ENCODE measurements at regions of chr3 and their contacts with region 1.

Region 1: DNA sequence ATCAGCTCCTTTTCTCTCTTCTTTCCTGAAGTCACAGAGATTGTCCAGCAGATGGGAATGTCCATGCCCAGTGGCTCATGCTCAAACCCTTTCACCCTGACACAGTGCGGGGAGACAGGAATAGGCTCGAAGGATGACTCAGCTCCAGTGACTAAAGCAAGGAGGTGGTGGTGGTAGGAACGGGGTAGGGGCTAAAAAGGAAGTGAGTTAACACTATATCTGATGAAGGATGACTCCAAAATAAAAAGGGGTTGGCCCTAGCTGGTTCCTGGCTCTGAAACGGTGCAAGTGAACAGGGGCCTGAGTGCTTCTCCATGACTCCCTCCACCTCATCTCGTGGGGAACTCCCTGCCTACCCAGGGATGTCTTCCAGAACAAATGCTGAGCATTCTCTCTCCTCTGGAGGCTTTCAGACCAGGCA is 167.4 kb upstream of the LPP start:
- DNase-seq: peak in 1 of 2 donors; percentile 26
- ATAC-seq: peak; percentile 40 to 69 (median 65)
- H3K4me3 ChIP-seq: no peak overlapping the region
- H3K4me3 Mint-ChIP-seq: peak overlapping the region; percentile 63
- H3K27ac ChIP-seq: no peak overlapping the region
- H3K27ac Mint-ChIP-seq: peak overlapping the region; percentile 47 to 74
- H3K4me1 ChIP-seq: peaks cover 26% of the 10 kb centered on the region
- H3K4me1 Mint-ChIP-seq: peaks cover 29 to 49% of the 10 kb centered on the region in 2 donors
- H3K27me3 ChIP-seq: no peaks in the 10 kb centered on the region
- H3K27me3 Mint-ChIP-seq: no peaks in the 10 kb centered on the region
- CTCF ChIP-seq: no peak

Region 2: GRCh38 chr3:187943679-187944390 is 42.7 kb before region 1 on chr3:
- intact Hi-C with region 1: no loop called
- DNase-seq: no peak
- ATAC-seq: no peak
- H3K4me3 ChIP-seq: no peak overlapping the region
- H3K4me3 Mint-ChIP-seq: no peak overlapping the region
- H3K27ac ChIP-seq: no peak overlapping the region
- H3K27ac Mint-ChIP-seq: no peak overlapping the region
- H3K4me1 ChIP-seq: peaks cover 19% of the 10 kb centered on the region
- H3K4me1 Mint-ChIP-seq: peaks cover 17 to 19% of the 10 kb centered on the region in 2 donors
- H3K27me3 ChIP-seq: no peaks in the 10 kb centered on the region
- H3K27me3 Mint-ChIP-seq: no peaks in the 10 kb centered on the region
- CTCF ChIP-seq: no peak

Region 3: GRCh38 chr3:187954516-187955075 is 31.9 kb before region 1 on chr3:
- intact Hi-C with region 1: loop called (anchors 5 kb)
- DNase-seq: no peak
- ATAC-seq: no peak
- H3K4me3 ChIP-seq: no peak overlapping the region
- H3K4me3 Mint-ChIP-seq: no peak overlapping the region
- H3K27ac ChIP-seq: no peak overlapping the region
- H3K27ac Mint-ChIP-seq: peak overlapping the region; percentile 15 to 21
- H3K4me1 ChIP-seq: peaks cover 47% of the 10 kb centered on the region
- H3K4me1 Mint-ChIP-seq: peaks cover 86 to 92% of the 10 kb centered on the region in 2 donors
- H3K27me3 ChIP-seq: no peaks in the 10 kb centered on the region
- H3K27me3 Mint-ChIP-seq: no peaks in the 10 kb centered on the region
- CTCF ChIP-seq: no peak

Region 4: GRCh38 chr3:188037216-188037718 is 50.7 kb after region 1 on chr3:
- intact Hi-C with region 1: no loop called
- DNase-seq: no peak
- ATAC-seq: no peak
- H3K4me3 ChIP-seq: no peak overlapping the region
- H3K4me3 Mint-ChIP-seq: no peak overlapping the region
- H3K27ac ChIP-seq: no peak overlapping the region
- H3K27ac Mint-ChIP-seq: no peak overlapping the region
- H3K4me1 ChIP-seq: peaks cover 15% of the 10 kb centered on the region
- H3K4me1 Mint-ChIP-seq: peaks cover 21 to 24% of the 10 kb centered on the region in 2 donors
- H3K27me3 ChIP-seq: no peaks in the 10 kb centered on the region
- H3K27me3 Mint-ChIP-seq: peaks cover 5 to 31% of the 10 kb centered on the region in 2 donors
- CTCF ChIP-seq: no peak

Region 5: GRCh38 chr3:188253800-188254452 is 267.4 kb after region 1 on chr3:
- intact Hi-C with region 1: no loop called
- DNase-seq: no peak
- ATAC-seq: peak in 1 of 3 donors; percentile 24
- H3K4me3 ChIP-seq: no peak overlapping the region
- H3K4me3 Mint-ChIP-seq: no peak overlapping the region
- H3K27ac ChIP-seq: no peak overlapping the region
- H3K27ac Mint-ChIP-seq: no peak overlapping the region
- H3K4me1 ChIP-seq: no peaks in the 10 kb centered on the region
- H3K4me1 Mint-ChIP-seq: peaks cover 44 to 45% of the 10 kb centered on the region in 2 donors
- H3K27me3 ChIP-seq: no peaks in the 10 kb centered on the region
- H3K27me3 Mint-ChIP-seq: no peaks in the 10 kb centered on the region
- CTCF ChIP-seq: no peak